ENCODE measurements at regions of chr14 and their contacts with region 1.

Region 1: GRCh38 chr14:60184146-60184904 is 19.1 kb upstream of the DHRS7 start:
- H3K4me3 ChIP-seq: peak overlapping the region; percentile 16; the same call in 1 of the 2 replicates
- H3K27ac ChIP-seq: no peak overlapping the region
- H3K4me1 ChIP-seq: no peaks in the 10 kb centered on the region; the same call in 1 of the 2 replicates
- CTCF ChIP-seq: no peak

Region 2: GRCh38 chr14:59507063-59507780 is 677.1 kb before region 1 on chr14:
- CTCF ChIA-PET with region 1: interaction called, 10 read pairs
- POLR2A ChIA-PET with region 1: no interaction called
- H3K4me3 ChIP-seq: no peak overlapping the region
- H3K27ac ChIP-seq: no peak overlapping the region
- H3K4me1 ChIP-seq: no peaks in the 10 kb centered on the region; the same call in 1 of the 2 replicates
- CTCF ChIP-seq: 0 out of 2 replicates have a peak, but pooled peaks have one; percentile 50

Region 3: DNA sequence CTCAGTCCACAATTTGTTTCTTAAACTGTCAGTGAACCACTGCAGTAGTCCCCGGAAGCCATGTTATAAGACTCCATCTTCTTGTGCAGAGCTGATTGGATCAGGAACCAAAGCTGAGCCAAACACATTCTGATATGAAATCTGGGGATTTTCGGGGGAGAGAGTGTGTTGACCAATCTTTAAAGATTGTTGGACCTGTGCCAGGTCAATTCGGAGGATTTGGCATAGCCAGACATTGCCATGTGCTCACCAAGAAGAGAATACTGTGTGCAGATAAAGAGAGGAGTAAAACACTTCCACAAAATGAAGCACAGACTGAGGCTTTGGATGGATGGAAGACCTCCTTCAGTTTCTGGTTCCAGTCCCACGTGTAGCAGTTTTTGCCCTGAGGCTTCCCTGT is 624.0 kb before region 1 on chr14:
- CTCF ChIA-PET with region 1: no interaction called
- POLR2A ChIA-PET with region 1: no interaction called
- H3K4me3 ChIP-seq: no peak overlapping the region
- H3K27ac ChIP-seq: no peak overlapping the region
- H3K4me1 ChIP-seq: peaks cover 19% of the 10 kb centered on the region
- CTCF ChIP-seq: no peak

Region 4: GRCh38 chr14:59964251-59965007 is 219.9 kb before region 1 on chr14:
- CTCF ChIA-PET with region 1: interaction called, 43 read pairs
- POLR2A ChIA-PET with region 1: no interaction called
- H3K4me3 ChIP-seq: no peak overlapping the region
- H3K27ac ChIP-seq: no peak overlapping the region
- H3K4me1 ChIP-seq: no peaks in the 10 kb centered on the region
- CTCF ChIP-seq: no peak

Region 5: GRCh38 chr14:60064491-60065072 is 119.7 kb before region 1 on chr14:
- CTCF ChIA-PET with region 1: interaction called, 73 read pairs
- POLR2A ChIA-PET with region 1: no interaction called
- H3K4me3 ChIP-seq: no peak overlapping the region
- H3K27ac ChIP-seq: no peak overlapping the region
- H3K4me1 ChIP-seq: no peaks in the 10 kb centered on the region
- CTCF ChIP-seq: no peak

Region 6: GRCh38 chr14:60331201-60332045 is 147.1 kb after region 1 on chr14:
- CTCF ChIA-PET with region 1: no interaction called
- POLR2A ChIA-PET with region 1: no interaction called
- H3K4me3 ChIP-seq: peak overlapping the region; percentile 13
- H3K27ac ChIP-seq: no peak overlapping the region; the same call in 1 of the 2 replicates
- H3K4me1 ChIP-seq: no peaks in the 10 kb centered on the region
- CTCF ChIP-seq: 0 out of 2 replicates have a peak, but pooled peaks have one; percentile 26

Measured in HEK293 (cell line).